Activated T-helper 1 cell treated with anti-CD3 and anti-CD28 coated beads, Interleukin-12 subunit alpha, Interleukin-12 subunit beta, Interleukin-2, Interleukin-4 antibody, amounts not matched to agents 30 ng/mL and 10 ng/mL and 1 ng/mL, durations not matched to agents 14 hours and 24 hours and 36 hours (primary cell): ENCODE measurements at regions of chr3 and their contacts with region 1.

Region 1: GRCh38 chr3:105891101-105891500 is 22.3 kb upstream of the CBLB start:
- DNase-seq: no peak
- H3K4me3 Mint-ChIP-seq: peak overlapping the region; percentile 35
- H3K27ac Mint-ChIP-seq: peak overlapping the region; percentile 82
- H3K4me1 Mint-ChIP-seq: peaks cover 14% of the 10 kb centered on the region
- H3K27me3 Mint-ChIP-seq: no peaks in the 10 kb centered on the region

Region 2: GRCh38 chr3:105764378-105765307 is 126.5 kb before region 1 on chr3:
- intact Hi-C with region 1: no loop called
- DNase-seq: no peak
- H3K4me3 Mint-ChIP-seq: peak overlapping the region; percentile 38
- H3K27ac Mint-ChIP-seq: peak overlapping the region; percentile 83
- H3K4me1 Mint-ChIP-seq: peaks cover 80% of the 10 kb centered on the region
- H3K27me3 Mint-ChIP-seq: no peaks in the 10 kb centered on the region

Region 3: DNA sequence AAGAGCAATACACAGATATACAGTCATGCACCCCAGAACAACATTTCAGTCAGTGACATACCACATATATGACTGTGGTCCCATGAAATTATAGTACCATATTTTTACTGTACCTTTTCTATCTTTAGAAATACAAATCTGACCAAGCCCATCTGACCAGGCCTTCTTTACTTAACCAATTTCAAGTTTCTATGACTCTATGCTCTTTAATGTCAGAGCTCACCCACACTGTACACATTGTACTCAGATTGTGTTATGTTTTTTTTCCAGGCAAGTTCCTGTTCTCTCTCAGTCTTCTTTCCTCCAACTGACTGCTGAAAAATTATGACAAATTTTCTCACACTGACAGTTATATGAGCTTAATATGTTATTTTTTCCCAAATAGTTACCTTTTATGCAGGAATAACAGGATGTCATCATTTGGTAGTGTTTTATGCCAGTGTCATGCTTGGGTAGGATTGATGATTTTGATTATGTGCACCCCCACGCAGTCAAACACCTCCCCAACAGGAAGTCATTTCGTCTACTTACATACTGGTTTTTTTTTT is 14.2 kb before region 1 on chr3:
- intact Hi-C with region 1: loop called (anchors 1 kb)
- DNase-seq: no peak
- H3K4me3 Mint-ChIP-seq: peak overlapping the region; percentile 64
- H3K27ac Mint-ChIP-seq: peak overlapping the region; percentile 80
- H3K4me1 Mint-ChIP-seq: peaks cover 35% of the 10 kb centered on the region
- H3K27me3 Mint-ChIP-seq: no peaks in the 10 kb centered on the region

Region 4: DNA sequence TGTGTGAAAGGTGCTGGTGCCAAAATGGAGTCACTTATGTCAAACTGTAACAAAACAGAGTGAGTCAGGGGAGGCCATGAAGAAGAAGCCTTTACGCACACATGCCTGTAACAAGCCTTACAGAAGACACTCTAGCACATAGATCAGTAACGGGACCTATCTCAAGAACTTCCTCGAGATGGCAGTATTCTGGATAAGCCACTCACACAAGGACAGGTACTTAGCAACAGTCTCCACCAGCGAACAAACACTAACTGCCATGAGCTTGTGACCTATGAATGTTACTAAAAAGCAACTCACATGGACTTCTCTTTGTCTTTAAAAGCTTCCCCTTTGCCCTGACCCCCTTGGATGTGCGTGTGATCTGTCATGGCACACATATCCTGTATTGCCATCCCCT is 1964.6 kb after region 1 on chr3:
- intact Hi-C with region 1: loop called (anchors 5 kb)
- DNase-seq: no peak
- H3K4me3 Mint-ChIP-seq: no peak overlapping the region
- H3K27ac Mint-ChIP-seq: no peak overlapping the region
- H3K4me1 Mint-ChIP-seq: no peaks in the 10 kb centered on the region
- H3K27me3 Mint-ChIP-seq: peaks cover 6% of the 10 kb centered on the region